Activated CD4-positive, alpha-beta memory T cell treated with anti-CD3 and anti-CD28 coated beads for 36 hours (primary cell): ENCODE measurements at regions of chr21 and their contacts with region 1.

Region 1: DNA sequence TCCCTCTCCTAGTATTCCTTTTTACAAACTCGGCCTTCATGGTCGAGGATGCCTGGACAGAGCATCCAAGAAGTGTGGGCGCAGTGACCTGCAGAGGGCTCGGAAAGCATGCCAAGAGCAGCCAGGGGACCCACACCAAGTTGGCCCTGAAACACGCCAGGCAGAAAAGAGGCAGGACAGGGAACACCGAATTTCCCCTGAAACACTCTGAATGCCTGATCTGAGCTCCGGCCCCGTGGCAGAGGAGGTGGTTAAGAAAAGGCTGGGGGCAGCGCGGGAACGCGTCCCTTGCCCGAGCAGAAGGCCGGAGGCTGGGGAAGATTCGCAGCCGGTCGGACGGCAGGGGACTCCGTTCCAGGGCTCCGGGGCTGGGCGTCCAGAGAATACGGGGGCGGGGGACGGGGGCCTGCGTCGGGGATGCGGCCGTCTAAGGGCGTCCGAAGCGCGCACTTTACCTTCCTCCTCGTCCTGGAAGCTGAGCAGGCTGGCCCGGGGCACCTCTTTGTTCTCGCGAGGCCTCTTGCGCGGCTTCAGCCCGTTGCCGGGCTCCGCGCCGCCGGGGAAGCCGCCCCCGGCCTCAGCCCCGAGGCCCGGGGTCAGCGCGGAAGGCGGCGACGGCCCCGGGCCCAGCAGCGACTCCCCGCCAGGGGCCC is 558 bp downstream of the PAXBP1 start:
- DNase-seq: peak; percentile 69
- H3K4me3 Mint-ChIP-seq: peak overlapping the region; percentile 98
- H3K27ac Mint-ChIP-seq: peak overlapping the region; percentile 93
- H3K4me1 Mint-ChIP-seq: peaks cover 61% of the 10 kb centered on the region
- H3K27me3 Mint-ChIP-seq: peaks cover 3% of the 10 kb centered on the region

Region 2: DNA sequence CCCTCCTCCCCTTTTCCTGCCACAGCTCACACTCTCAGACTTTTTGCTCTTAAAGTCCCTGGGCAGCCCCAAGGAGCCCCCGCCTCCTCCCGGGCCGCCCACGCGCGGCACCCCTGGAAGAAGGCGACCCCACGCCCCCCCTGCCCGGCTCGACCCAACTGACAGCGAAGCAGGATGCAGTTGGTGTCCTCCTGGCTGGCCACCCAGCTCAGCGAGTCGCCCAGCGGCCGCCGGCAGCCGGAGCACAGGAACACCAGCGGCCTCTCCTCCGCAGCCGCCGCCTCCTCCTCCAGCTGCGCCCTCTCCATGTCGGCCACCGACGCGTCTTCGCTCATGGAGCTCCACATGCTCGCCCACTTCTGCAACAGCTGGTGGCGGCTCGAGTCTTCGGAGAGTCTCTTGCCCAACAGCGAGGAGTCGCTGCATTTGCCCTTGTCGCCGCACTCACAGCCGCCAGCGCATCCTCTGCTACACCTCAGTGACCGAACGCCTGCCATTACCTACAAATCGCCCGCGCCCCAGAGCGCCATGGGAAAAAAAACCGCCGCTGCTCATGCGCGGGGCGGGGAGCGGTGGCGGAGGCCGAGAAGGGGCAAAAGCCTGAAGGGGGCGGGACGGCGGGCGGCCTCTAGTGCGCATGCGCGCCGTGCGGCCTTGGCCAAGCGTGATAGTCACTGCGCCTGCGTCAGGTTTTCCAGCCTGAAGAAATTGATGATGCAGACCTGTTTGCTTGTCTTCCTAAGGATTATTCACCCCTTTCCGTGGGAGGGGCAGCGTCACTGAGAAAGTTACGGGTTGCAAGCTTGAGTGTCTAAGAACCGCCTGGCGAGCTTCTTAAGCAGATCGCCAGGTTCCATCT is 492.2 kb before region 1 on chr21 and contains the start of gene MIS18A:
- CTCF ChIA-PET with region 1: no interaction called
- POLR2A ChIA-PET with region 1: no interaction called
- intact Hi-C with region 1: loop called (anchors 1 kb)
- DNase-seq: peak; percentile 99
- H3K4me3 Mint-ChIP-seq: peak within 1 kb of the TSS; percentile 99
- H3K27ac Mint-ChIP-seq: peak within 1 kb of the TSS; percentile 88
- H3K4me1 Mint-ChIP-seq: peaks cover 11% of the 10 kb centered on the region
- H3K27me3 Mint-ChIP-seq: no peaks in the 10 kb centered on the region
- total RNA-seq, gene MIS18A: 34.2 to 36.1 TPM

Region 3: GRCh38 chr21:32727687-32728455 is 43.1 kb before region 1 on chr21 and contains the start of gene SYNJ1:
- CTCF ChIA-PET with region 1: interaction called, 11 read pairs
- POLR2A ChIA-PET with region 1: interaction called, 21 read pairs
- intact Hi-C with region 1: loop called (anchors 1 kb)
- DNase-seq: peak; percentile 96
- H3K4me3 Mint-ChIP-seq: peak within 1 kb of the TSS; percentile 92
- H3K27ac Mint-ChIP-seq: peak within 1 kb of the TSS; percentile 92
- H3K4me1 Mint-ChIP-seq: peaks cover 51% of the 10 kb centered on the region
- H3K27me3 Mint-ChIP-seq: no peaks in the 10 kb centered on the region
- total RNA-seq, gene SYNJ1: 13.3 to 14.2 TPM

Region 4: GRCh38 chr21:32826329-32827167 is 55.6 kb after region 1 on chr21:
- CTCF ChIA-PET with region 1: interaction called, 7 read pairs
- POLR2A ChIA-PET with region 1: no interaction called
- intact Hi-C with region 1: loop called (anchors 5 kb)
- DNase-seq: peak; percentile 43
- H3K4me3 Mint-ChIP-seq: no peak overlapping the region
- H3K27ac Mint-ChIP-seq: no peak overlapping the region
- H3K4me1 Mint-ChIP-seq: no peaks in the 10 kb centered on the region
- H3K27me3 Mint-ChIP-seq: peaks cover 1% of the 10 kb centered on the region

Region 5: DNA sequence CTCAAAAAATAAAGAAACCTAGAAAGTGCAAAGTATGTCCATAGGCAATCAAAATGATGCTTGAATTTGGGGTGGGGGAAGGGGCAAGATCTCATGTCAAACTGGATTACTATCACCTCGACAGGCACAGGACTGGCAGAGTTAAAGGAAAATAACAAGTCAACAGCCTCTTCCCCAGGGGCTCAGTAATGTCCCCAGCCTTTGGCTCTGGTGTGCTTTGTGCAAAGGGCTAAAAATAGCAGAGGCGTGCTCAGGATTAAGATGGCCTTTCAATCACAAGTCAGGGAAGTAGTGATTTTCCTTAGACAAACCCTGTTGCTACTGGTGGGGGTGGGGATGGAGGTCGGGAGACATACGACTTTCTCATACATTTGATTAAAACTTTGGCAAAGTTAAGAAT is 191.3 kb after region 1 on chr21:
- CTCF ChIA-PET with region 1: no interaction called
- POLR2A ChIA-PET with region 1: no interaction called
- intact Hi-C with region 1: no loop called
- DNase-seq: no peak
- H3K4me3 Mint-ChIP-seq: no peak overlapping the region
- H3K27ac Mint-ChIP-seq: no peak overlapping the region
- H3K4me1 Mint-ChIP-seq: no peaks in the 10 kb centered on the region
- H3K27me3 Mint-ChIP-seq: peaks cover 24% of the 10 kb centered on the region

Region 6: GRCh38 chr21:33380483-33380998 is 609.5 kb after region 1 on chr21:
- CTCF ChIA-PET with region 1: no interaction called
- POLR2A ChIA-PET with region 1: no interaction called
- intact Hi-C with region 1: loop called (anchors 1 kb)
- DNase-seq: peak; percentile 97
- H3K4me3 Mint-ChIP-seq: peak overlapping the region; percentile 44
- H3K27ac Mint-ChIP-seq: peak overlapping the region; percentile 81
- H3K4me1 Mint-ChIP-seq: peaks cover 61% of the 10 kb centered on the region
- H3K27me3 Mint-ChIP-seq: peaks cover 10% of the 10 kb centered on the region

Region 7: GRCh38 chr21:33641336-33642026 is 870.5 kb after region 1 on chr21 and contains the start of gene CRYZL1:
- CTCF ChIA-PET with region 1: no interaction called
- POLR2A ChIA-PET with region 1: no interaction called
- intact Hi-C with region 1: loop called (anchors 2 kb)
- DNase-seq: peak; percentile 100
- H3K4me3 Mint-ChIP-seq: peak within 1 kb of the TSS; percentile 86
- H3K27ac Mint-ChIP-seq: peak within 1 kb of the TSS; percentile 93
- H3K4me1 Mint-ChIP-seq: peaks cover 24% of the 10 kb centered on the region
- H3K27me3 Mint-ChIP-seq: peaks cover 16% of the 10 kb centered on the region
- total RNA-seq, gene CRYZL1: 32.8 to 34.9 TPM